Naive thymus-derived CD4-positive, alpha-beta T cell (primary cell): ENCODE measurements at regions of chr7 and their contacts with region 1.

Region 1: GRCh38 chr7:142811154-142811737 is 40.5 kb downstream of the PRSS2 start:
- DNase-seq: peak in 7 of 9 donors; percentile 73 to 86 (median 79)
- ATAC-seq: peak; percentile 19
- H3K4me3 ChIP-seq: no peak overlapping the region
- H3K4me3 Mint-ChIP-seq: peak overlapping the region; percentile 58 to 100 (median 76)
- H3K27ac ChIP-seq: peak overlapping the region; percentile 98
- H3K27ac Mint-ChIP-seq: peak overlapping the region; percentile 92 to 100 (median 100)
- H3K4me1 ChIP-seq: peaks cover 47 to 89% of the 10 kb centered on the region in 2 donors
- H3K4me1 Mint-ChIP-seq: peaks cover 57 to 100% (median 91%) of the 10 kb centered on the region in 7 donors
- H3K27me3 ChIP-seq: no peaks in the 10 kb centered on the region
- H3K27me3 Mint-ChIP-seq: peaks cover 0 to 6% (median 0%) of the 10 kb centered on the region in 5 donors

Region 2: DNA sequence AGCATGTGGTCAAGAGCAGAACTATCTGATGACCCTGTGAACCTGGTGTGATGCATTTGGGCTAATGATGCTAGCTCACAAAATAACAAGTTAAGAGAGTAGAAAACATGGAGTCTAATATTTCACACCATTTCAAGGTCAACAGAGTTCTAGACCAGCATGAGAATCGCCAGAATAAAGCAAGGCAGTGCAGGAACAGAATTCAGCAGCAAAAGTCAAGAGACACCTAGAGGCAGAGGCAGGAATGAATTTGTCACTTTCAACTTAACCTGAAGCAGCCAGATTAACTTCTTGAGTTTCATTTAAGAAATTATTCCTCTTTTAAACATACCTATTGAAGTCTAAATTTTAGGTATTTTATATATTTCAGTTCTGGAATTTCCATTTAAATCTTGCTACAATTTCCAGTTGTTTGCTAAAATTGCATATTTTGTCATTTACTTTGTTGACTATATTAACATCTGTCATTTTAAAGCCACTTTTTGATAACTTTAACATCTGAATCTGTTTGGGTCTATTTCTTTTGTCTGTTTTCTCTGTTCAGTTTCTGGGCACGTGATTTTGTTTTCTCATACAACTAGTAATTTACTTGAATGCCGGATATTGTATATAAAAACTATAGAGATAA is 509.2 kb before region 1 on chr7:
- CTCF ChIA-PET with region 1: interaction called, 13 read pairs
- POLR2A ChIA-PET with region 1: interaction called, 87 read pairs
- intact Hi-C with region 1: loop called (anchors 1 kb)
- DNase-seq: peak in 1 of 9 donors; percentile 34
- ATAC-seq: no peak
- H3K4me3 ChIP-seq: no peak overlapping the region
- H3K4me3 Mint-ChIP-seq: peak overlapping the region in 2 of 10 donors; percentile 17 to 49
- H3K27ac ChIP-seq: no peak overlapping the region
- H3K27ac Mint-ChIP-seq: no peak overlapping the region
- H3K4me1 ChIP-seq: peaks cover 0 to 28% of the 10 kb centered on the region in 2 donors
- H3K4me1 Mint-ChIP-seq: peaks cover 7 to 52% (median 35%) of the 10 kb centered on the region in 7 donors
- H3K27me3 ChIP-seq: no peaks in the 10 kb centered on the region
- H3K27me3 Mint-ChIP-seq: peaks cover 4 to 25% (median 16%) of the 10 kb centered on the region in 5 donors

Region 3: GRCh38 chr7:142379201-142379885 is 431.9 kb before region 1 on chr7:
- CTCF ChIA-PET with region 1: interaction called, 3 read pairs
- POLR2A ChIA-PET with region 1: interaction called, 13 read pairs
- intact Hi-C with region 1: no loop called
- DNase-seq: no peak
- ATAC-seq: no peak
- H3K4me3 ChIP-seq: no peak overlapping the region
- H3K4me3 Mint-ChIP-seq: no peak overlapping the region
- H3K27ac ChIP-seq: no peak overlapping the region
- H3K27ac Mint-ChIP-seq: peak overlapping the region in 1 of 9 donors; percentile 50
- H3K4me1 ChIP-seq: peaks cover 0 to 5% of the 10 kb centered on the region in 2 donors
- H3K4me1 Mint-ChIP-seq: peaks cover 10 to 20% (median 16%) of the 10 kb centered on the region in 7 donors
- H3K27me3 ChIP-seq: no peaks in the 10 kb centered on the region
- H3K27me3 Mint-ChIP-seq: peaks cover 0 to 17% (median 3%) of the 10 kb centered on the region in 5 donors

Region 4: GRCh38 chr7:142496545-142497041 is 314.7 kb before region 1 on chr7:
- CTCF ChIA-PET with region 1: interaction called, 5 read pairs
- POLR2A ChIA-PET with region 1: interaction called, 23 read pairs
- intact Hi-C with region 1: loop called in 1 of 2 experiments (anchors 1 kb)
- DNase-seq: peak in 7 of 9 donors; percentile 39 to 58 (median 45)
- ATAC-seq: peak; percentile 71
- H3K4me3 ChIP-seq: peak overlapping the region; percentile 30
- H3K4me3 Mint-ChIP-seq: peak overlapping the region; percentile 41 to 85 (median 70)
- H3K27ac ChIP-seq: peak overlapping the region; percentile 64
- H3K27ac Mint-ChIP-seq: peak overlapping the region; percentile 33 to 93 (median 77)
- H3K4me1 ChIP-seq: peaks cover 5 to 46% of the 10 kb centered on the region in 2 donors
- H3K4me1 Mint-ChIP-seq: peaks cover 15 to 72% (median 65%) of the 10 kb centered on the region in 7 donors
- H3K27me3 ChIP-seq: no peaks in the 10 kb centered on the region
- H3K27me3 Mint-ChIP-seq: peaks cover 0 to 9% (median 0%) of the 10 kb centered on the region in 5 donors

Region 5: GRCh38 chr7:142612237-142612881 is 198.9 kb before region 1 on chr7:
- CTCF ChIA-PET with region 1: interaction called, 4 read pairs
- POLR2A ChIA-PET with region 1: interaction called, 28 read pairs
- intact Hi-C with region 1: no loop called
- DNase-seq: no peak
- ATAC-seq: no peak
- H3K4me3 ChIP-seq: no peak overlapping the region
- H3K4me3 Mint-ChIP-seq: no peak overlapping the region
- H3K27ac ChIP-seq: no peak overlapping the region
- H3K27ac Mint-ChIP-seq: peak overlapping the region in 5 of 9 donors; percentile 5 to 42 (median 38)
- H3K4me1 ChIP-seq: no peaks in the 10 kb centered on the region
- H3K4me1 Mint-ChIP-seq: peaks cover 0 to 45% (median 15%) of the 10 kb centered on the region in 7 donors
- H3K27me3 ChIP-seq: no peaks in the 10 kb centered on the region
- H3K27me3 Mint-ChIP-seq: peaks cover 0 to 8% (median 4%) of the 10 kb centered on the region in 5 donors

Region 6: DNA sequence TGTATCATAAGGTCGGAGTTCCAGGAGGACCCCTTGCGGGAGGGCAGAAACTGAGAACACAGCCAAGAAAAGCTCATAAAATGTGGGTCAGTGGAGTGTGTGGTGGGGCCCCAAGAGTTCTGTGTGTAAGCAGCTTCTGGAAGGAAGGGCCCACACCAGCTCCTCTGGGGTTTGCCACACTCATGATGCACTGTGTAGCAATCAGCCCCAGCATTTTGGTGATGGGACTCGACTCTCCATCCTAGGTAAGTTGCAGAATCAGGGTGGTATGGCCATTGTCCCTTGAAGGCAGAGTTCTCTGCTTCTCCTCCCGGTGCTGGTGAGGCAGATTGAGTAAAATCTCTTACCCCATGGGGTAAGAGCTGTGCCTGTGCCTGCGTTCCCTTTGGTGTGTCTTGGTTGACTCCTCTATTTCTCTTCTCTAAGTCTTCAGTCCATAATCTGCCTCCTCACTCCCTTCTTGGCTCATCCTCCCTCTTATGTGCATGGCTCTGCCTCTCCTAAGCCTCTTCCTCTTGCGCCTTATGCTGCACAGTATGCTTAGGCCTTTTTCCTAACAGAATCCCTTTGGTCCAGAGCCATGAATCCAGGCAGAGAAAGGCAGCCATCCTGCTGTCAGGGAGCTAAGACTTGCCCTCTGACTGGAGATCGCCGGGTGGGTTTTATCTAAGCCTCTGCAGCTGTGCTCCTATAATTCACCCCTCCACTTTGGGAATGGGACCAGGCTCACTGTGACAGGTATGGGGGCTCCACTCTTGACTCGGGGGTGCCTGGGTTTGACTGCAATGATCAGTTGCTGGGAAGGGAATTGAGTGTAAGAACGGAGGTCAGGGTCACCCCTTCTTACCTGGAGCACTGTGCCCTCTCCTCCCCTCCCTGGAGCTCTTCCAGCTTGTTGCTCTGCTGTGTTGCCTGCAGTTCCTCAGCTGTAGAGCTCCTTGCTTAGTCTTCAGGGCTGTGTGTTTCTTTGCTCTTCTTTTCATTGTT is 22.6 kb before region 1 on chr7:
- CTCF ChIA-PET with region 1: interaction called, 314 read pairs
- POLR2A ChIA-PET with region 1: interaction called, 5,102 read pairs
- intact Hi-C with region 1: loop called (anchors 1 kb)
- DNase-seq: peak in 5 of 9 donors; percentile 7 to 33 (median 18)
- ATAC-seq: no peak
- H3K4me3 ChIP-seq: peak overlapping the region; percentile 96
- H3K4me3 Mint-ChIP-seq: peak overlapping the region; percentile 91 to 100 (median 98)
- H3K27ac ChIP-seq: peak overlapping the region; percentile 98
- H3K27ac Mint-ChIP-seq: peak overlapping the region; percentile 95 to 100 (median 99)
- H3K4me1 ChIP-seq: peaks cover 14 to 19% of the 10 kb centered on the region in 2 donors
- H3K4me1 Mint-ChIP-seq: peaks cover 13 to 28% (median 21%) of the 10 kb centered on the region in 7 donors
- H3K27me3 ChIP-seq: no peaks in the 10 kb centered on the region
- H3K27me3 Mint-ChIP-seq: peaks cover 0 to 3% (median 0%) of the 10 kb centered on the region in 5 donors

Region 7: DNA sequence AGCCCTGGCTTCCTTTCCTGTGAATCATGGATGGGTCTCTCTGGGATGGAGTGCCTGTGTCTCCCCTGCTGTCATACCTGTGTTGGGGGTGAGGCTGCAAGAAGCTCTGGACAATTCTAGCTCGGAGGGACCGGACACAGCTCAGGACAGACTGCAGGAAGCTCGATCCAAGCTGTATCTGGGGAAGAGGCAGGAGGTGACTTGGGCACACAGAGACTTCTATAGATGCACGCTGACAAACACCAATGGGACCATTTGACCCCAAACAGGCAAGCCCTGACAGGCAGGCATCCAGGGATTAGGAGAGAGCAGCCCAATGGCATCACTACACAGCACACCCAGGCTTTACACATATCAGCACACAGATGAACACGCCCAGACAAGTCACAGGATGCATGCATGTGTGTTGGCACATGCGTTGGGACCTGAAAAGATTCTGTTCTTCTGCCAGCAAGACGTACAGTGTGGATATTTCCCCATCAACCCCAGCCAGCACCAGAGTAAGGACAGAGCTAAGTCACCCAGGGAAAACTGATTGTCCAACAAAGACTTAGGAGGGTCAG is 132.5 kb after region 1 on chr7:
- CTCF ChIA-PET with region 1: no interaction called
- POLR2A ChIA-PET with region 1: no interaction called
- intact Hi-C with region 1: no loop called
- DNase-seq: no peak
- ATAC-seq: no peak
- H3K4me3 ChIP-seq: no peak overlapping the region
- H3K4me3 Mint-ChIP-seq: no peak overlapping the region
- H3K27ac ChIP-seq: no peak overlapping the region
- H3K27ac Mint-ChIP-seq: no peak overlapping the region
- H3K4me1 ChIP-seq: no peaks in the 10 kb centered on the region
- H3K4me1 Mint-ChIP-seq: peaks cover 0 to 5% (median 0%) of the 10 kb centered on the region in 7 donors
- H3K27me3 ChIP-seq: no peaks in the 10 kb centered on the region
- H3K27me3 Mint-ChIP-seq: peaks cover 4 to 24% (median 10%) of the 10 kb centered on the region in 5 donors

Region 8: GRCh38 chr7:142964502-142965246 is 153.4 kb after region 1 on chr7:
- CTCF ChIA-PET with region 1: no interaction called
- POLR2A ChIA-PET with region 1: no interaction called
- intact Hi-C with region 1: no loop called
- DNase-seq: no peak
- ATAC-seq: no peak
- H3K4me3 ChIP-seq: no peak overlapping the region
- H3K4me3 Mint-ChIP-seq: no peak overlapping the region
- H3K27ac ChIP-seq: no peak overlapping the region
- H3K27ac Mint-ChIP-seq: no peak overlapping the region
- H3K4me1 ChIP-seq: no peaks in the 10 kb centered on the region
- H3K4me1 Mint-ChIP-seq: peaks cover 0 to 2% (median 0%) of the 10 kb centered on the region in 7 donors
- H3K27me3 ChIP-seq: peaks cover 0 to 4% of the 10 kb centered on the region in 2 donors
- H3K27me3 Mint-ChIP-seq: peaks cover 28 to 46% (median 33%) of the 10 kb centered on the region in 5 donors

Region 9: GRCh38 chr7:143042159-143042789 is 231.0 kb after region 1 on chr7:
- CTCF ChIA-PET with region 1: no interaction called
- POLR2A ChIA-PET with region 1: no interaction called
- intact Hi-C with region 1: no loop called
- DNase-seq: no peak
- ATAC-seq: no peak
- H3K4me3 ChIP-seq: no peak overlapping the region
- H3K4me3 Mint-ChIP-seq: no peak overlapping the region
- H3K27ac ChIP-seq: no peak overlapping the region
- H3K27ac Mint-ChIP-seq: no peak overlapping the region
- H3K4me1 ChIP-seq: no peaks in the 10 kb centered on the region
- H3K4me1 Mint-ChIP-seq: peaks cover 0 to 7% (median 0%) of the 10 kb centered on the region in 7 donors
- H3K27me3 ChIP-seq: no peaks in the 10 kb centered on the region
- H3K27me3 Mint-ChIP-seq: peaks cover 0 to 8% (median 7%) of the 10 kb centered on the region in 5 donors

Region 10: DNA sequence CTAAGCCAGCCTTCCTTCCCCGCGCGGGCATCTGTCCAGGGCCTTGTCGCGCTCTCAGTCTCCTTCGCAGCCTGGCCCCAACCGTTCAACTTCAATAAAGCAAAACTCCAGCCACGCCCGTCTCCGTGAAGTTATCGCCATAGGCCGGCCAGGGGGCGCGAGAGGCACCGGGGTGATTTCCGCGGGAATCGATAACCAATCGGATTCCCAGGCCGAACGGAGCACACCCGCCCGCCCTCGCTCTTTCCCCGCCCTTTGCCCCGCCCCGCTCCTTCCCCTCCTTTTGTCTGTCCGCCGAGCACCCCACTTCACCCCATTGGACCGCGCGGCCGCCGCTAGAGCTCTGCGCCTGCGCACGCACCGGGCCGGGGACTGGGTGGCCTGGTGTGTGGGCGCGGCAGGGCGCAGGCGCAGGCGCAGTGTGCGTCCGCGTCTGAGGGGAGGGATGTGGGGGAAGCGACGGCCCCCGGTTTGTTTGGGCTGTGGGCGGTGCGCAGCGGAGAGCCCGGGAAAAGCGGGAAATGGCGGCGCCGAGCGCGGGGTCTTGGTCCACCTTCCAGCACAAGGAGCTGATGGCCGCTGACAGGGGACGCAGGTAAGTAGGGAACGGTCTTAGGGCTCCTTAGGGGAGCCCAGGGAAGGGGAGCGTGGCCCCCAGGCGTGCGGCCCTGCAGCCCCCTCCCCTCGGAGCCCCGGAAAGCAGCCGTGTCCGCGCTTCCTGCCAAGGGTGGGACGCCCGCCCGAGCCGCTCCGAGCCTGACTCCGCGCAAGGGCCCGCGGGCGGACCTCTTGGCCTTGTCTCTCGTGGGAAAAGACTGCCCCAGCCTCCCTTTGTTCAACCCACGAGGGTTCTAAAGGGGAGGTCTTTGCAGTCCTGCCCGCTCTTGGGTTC is 476.9 kb after region 1 on chr7 and contains the start of gene CASP2:
- CTCF ChIA-PET with region 1: no interaction called
- POLR2A ChIA-PET with region 1: interaction called, 6 read pairs
- intact Hi-C with region 1: loop called in 1 of 2 experiments (anchors 2 kb)
- DNase-seq: peak; percentile 98 to 99 (median 99)
- ATAC-seq: peak; percentile 97
- H3K4me3 ChIP-seq: peak within 1 kb of the TSS; percentile 92
- H3K4me3 Mint-ChIP-seq: peak within 1 kb of the TSS; percentile 88 to 99 (median 95)
- H3K27ac ChIP-seq: peak within 1 kb of the TSS; percentile 85
- H3K27ac Mint-ChIP-seq: peak within 1 kb of the TSS; percentile 86 to 95 (median 93)
- H3K4me1 ChIP-seq: peaks cover 13 to 35% of the 10 kb centered on the region in 2 donors
- H3K4me1 Mint-ChIP-seq: peaks cover 41 to 66% (median 59%) of the 10 kb centered on the region in 7 donors
- H3K27me3 ChIP-seq: no peaks in the 10 kb centered on the region
- H3K27me3 Mint-ChIP-seq: no peaks in the 10 kb centered on the region
- total RNA-seq, gene CASP2: 29.6 to 97.7 (median 69.1) TPM